ENCODE measurements at regions of chr14 and their contacts with region 1.

Region 1: GRCh38 chr14:92951912-92952471 is 29.0 kb downstream of the CHGA start:
- DNase-seq: no peak
- H3K4me3 ChIP-seq: no peak overlapping the region
- H3K27me3 ChIP-seq: no peaks in the 10 kb centered on the region
- CTCF ChIP-seq: peak; percentile 95

Region 2: DNA sequence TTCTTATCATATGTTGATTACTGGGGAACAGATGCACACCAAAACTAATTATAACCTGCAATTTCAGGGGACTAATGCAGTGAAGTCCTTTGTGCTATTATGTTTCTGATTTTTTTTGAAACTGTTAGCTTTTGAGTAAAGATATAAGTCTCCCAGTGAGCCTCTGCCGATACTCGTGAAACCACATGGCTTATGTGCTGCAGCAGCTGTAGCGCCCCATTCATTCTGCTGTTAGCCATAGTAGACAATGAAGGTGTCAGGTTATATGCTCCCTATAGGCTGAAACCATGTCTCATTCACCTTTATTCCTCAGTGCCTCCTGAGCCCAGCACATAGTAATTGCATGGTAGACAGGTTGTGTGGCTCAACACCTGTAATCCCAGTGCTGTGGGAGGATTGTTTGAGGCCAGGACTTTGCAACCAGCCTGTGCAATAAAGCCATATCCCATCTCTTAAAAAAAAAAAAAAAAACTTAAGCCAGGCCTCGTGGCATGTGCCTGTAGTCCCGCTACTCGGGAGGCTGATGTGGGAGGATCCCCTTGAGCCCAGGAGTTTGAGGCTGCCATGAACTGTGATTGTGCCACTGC is 132.9 kb before region 1 on chr14:
- CTCF ChIA-PET with region 1: no interaction called
- POLR2A ChIA-PET with region 1: no interaction called
- DNase-seq: no peak
- H3K4me3 ChIP-seq: no peak overlapping the region
- H3K27me3 ChIP-seq: no peaks in the 10 kb centered on the region
- CTCF ChIP-seq: no peak

Region 3: GRCh38 chr14:93132470-93133065 is 180.6 kb after region 1 on chr14:
- CTCF ChIA-PET with region 1: interaction called, 54 read pairs
- POLR2A ChIA-PET with region 1: no interaction called
- DNase-seq: no peak
- H3K4me3 ChIP-seq: no peak overlapping the region
- H3K27me3 ChIP-seq: peaks cover 7% of the 10 kb centered on the region
- CTCF ChIP-seq: peak; percentile 49

Region 4: DNA sequence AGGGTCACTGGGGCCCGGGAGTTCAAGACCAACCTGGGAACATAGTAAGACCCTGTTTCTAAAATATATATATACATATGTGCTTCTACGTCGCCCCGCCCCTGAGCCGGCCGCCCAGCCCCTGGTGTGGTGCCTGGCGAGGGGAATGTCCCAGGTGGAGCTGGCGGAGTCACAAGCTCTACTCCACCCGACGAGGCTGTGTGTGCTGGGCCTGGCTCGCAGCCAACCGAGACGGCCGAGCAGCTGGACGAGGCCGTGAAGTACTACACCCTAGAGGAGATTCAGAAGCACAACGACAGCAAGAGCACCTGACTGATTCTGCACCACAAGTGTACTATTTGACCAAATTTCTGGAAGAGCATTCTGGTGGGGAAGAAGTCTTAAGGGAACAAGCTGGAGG is 185.9 kb after region 1 on chr14:
- CTCF ChIA-PET with region 1: interaction called, 54 read pairs
- POLR2A ChIA-PET with region 1: no interaction called
- DNase-seq: no peak
- H3K4me3 ChIP-seq: no peak overlapping the region
- H3K27me3 ChIP-seq: peaks cover 3% of the 10 kb centered on the region; the same call in 1 of the 2 replicates
- CTCF ChIP-seq: no peak

Region 5: DNA sequence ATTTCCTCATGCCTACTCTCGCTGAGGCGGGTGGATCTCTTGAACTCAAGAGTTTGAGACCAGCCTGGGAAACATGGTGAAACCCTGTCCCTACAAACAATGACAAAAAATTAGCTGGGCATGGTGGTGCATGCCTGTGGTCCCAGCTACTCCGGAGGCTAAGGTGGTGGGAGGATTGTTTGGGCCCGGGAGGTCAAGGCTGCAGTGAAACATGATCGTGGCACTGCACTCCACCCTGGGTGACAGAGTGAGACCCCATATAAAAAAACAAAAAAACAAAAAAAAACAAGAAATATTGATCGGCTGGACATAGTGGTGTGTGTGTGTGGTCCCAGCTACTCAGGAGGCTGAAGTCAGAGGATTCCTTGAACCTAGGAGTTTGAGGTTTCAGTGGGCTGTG is 223.5 kb after region 1 on chr14:
- CTCF ChIA-PET with region 1: interaction called, 21 read pairs
- POLR2A ChIA-PET with region 1: interaction called, 3 read pairs
- DNase-seq: no peak
- H3K4me3 ChIP-seq: no peak overlapping the region
- H3K27me3 ChIP-seq: peaks cover 3% of the 10 kb centered on the region; the same call in 1 of the 2 replicates
- CTCF ChIP-seq: no peak

Region 6: DNA sequence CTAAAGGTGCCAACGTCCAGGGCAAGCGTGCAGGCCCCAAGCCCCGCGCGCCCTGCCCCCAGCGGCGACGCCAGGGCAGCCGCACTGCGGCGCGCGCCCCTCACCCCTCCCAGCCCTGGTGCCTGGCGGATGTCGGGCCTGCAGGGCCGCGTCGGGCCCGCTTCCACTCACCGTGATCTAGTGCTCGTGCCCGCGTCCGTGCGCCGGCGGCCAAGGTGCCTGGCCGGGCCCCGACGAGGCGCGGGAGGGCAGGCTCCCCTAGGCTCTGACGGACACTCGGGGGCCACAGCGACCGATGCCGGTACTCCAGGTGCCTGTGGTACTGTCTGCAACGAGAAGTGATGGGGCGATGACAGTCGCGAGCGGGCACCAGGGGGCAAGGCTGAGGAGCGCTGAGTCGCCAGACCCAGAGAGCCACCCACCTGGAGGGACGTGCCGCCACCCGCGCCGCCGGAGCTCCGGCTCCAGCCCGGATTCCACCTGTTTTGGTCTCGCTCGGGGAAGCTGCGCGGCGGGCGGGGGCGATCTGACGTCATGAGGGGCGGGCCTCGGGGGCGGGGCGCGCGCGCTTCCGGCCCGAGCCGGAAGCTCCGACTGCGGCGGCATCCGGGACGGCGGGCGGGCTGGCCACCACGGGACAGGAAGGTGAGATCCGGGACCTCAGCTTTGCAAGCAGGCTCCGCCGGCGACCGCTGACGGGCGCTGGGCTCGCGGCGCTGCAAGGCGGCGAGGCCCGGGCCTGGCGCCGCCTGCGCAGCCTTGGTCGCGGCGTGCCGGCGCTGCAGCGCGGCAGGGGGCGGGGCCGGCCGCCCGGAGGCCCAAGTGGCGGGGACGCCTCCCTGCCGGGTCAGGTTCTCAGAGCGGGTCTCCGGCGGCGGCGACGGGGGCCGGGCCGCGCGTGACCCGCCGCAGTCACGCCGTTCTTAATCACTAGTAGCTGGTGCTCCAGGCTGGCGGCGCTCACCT is 232.7 kb after region 1 on chr14 and contains the starts of genes LYSET and MOAP1:
- CTCF ChIA-PET with region 1: interaction called, 21 read pairs
- POLR2A ChIA-PET with region 1: no interaction called
- DNase-seq: no peak
- H3K4me3 ChIP-seq: peak within 1 kb of the TSS; percentile 99
- H3K27me3 ChIP-seq: no peaks in the 10 kb centered on the region
- CTCF ChIP-seq: no peak
- polyA plus RNA-seq, gene LYSET: 6.8 and 12.8 TPM in 2 replicates
- polyA plus RNA-seq, gene MOAP1: 15.5 and 20.0 TPM in 2 replicates